Psoas muscle (tissue), 8 donors: ENCODE measurements at regions of chr17 and their contacts with region 1.

Region 1: DNA sequence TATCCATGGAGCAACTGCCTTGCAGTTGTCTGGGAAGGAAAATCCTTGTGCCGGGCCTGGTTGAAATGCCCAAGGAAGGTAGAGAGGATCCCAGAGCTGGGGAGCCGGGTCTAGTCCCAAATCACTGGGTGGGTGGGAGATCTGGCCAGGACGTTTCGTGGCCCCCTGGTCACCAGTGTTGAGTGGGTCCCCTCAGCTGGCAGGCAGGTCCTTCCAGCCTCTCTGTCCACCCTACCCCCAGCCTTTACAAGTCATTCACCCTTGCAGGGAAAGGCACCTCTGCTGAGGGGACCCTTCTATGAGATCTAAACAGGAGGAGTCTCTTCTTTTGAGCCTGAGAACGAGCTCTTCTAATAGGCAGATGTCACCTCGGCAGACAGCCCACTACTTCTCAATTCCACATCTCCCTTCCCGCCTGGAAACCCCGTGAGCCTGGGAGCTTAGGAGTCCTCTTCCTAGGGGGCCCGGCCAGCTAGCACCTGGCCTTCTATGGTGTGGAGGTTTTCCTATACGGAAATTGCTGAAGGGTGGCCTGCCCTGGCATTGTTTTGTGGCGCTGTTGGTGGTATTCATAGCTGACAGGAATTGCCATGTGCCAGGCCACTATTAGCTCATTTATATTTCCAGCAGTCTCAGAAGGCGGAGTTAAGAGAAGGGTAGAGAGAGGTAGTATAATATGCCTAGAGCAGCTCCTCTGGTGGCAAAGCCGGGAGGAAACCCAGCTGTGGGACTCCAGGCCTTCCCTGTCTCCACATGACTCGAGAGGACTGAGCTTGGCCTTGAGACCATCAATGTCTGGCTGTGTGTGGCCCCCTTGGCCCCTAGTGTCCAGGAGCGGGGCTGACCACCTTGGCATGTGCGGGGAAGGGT is 13.3 kb downstream of the MPRIP start:
- DNase-seq: peak in 1 of 2 donors; percentile 77
- ATAC-seq: peak; percentile 84 to 90 (median 86)
- H3K4me3 ChIP-seq: peak overlapping the region; percentile 32
- H3K27ac ChIP-seq: peak overlapping the region; percentile 96
- H3K4me1 ChIP-seq: peaks cover 99% of the 10 kb centered on the region
- H3K27me3 ChIP-seq: no peaks in the 10 kb centered on the region
- CTCF ChIP-seq: peak; percentile 39

Region 2: GRCh38 chr17:17313350-17313991 is 257.9 kb after region 1 on chr17:
- intact Hi-C with region 1: no loop called
- DNase-seq: peak in 1 of 2 donors; percentile 64
- ATAC-seq: peak; percentile 44 to 74 (median 67)
- H3K4me3 ChIP-seq: no peak overlapping the region
- H3K27ac ChIP-seq: no peak overlapping the region
- H3K4me1 ChIP-seq: no peaks in the 10 kb centered on the region
- H3K27me3 ChIP-seq: no peaks in the 10 kb centered on the region
- CTCF ChIP-seq: peak; percentile 44

Region 3: GRCh38 chr17:18267927-18268711 is 1212.6 kb after region 1 on chr17:
- intact Hi-C with region 1: loop called in 1 of 2 experiments (anchors 5 kb)
- DNase-seq: no peak
- ATAC-seq: peak; percentile 34 to 63 (median 48)
- H3K4me3 ChIP-seq: no peak overlapping the region
- H3K27ac ChIP-seq: peak overlapping the region; percentile 36
- H3K4me1 ChIP-seq: peaks cover 19% of the 10 kb centered on the region
- H3K27me3 ChIP-seq: no peaks in the 10 kb centered on the region
- CTCF ChIP-seq: no peak